HepG2 (cell line): ENCODE measurements at regions of chr20 and their contacts with region 1.

Region 1: GRCh38 chr20:10783707-10784578 is 110.1 kb upstream of the JAG1 start:
- DNase-seq: no peak
- ATAC-seq: peak; percentile 32; the same call in 2 of the 3 replicates
- H3K4me3 ChIP-seq: no peak overlapping the region
- H3K27ac ChIP-seq: no peak overlapping the region
- H3K4me1 ChIP-seq: peaks cover 16% of the 10 kb centered on the region
- H3K27me3 ChIP-seq: peaks cover 0 to 10% of the 10 kb centered on the region in 2 experiments; a peak in 2 of 5 replicates
- CTCF ChIP-seq: no peak
- EP300 ChIP-seq: no peak
- POLR2A ChIP-seq: no peak
- RAD21 ChIP-seq: no peak

Region 2: DNA sequence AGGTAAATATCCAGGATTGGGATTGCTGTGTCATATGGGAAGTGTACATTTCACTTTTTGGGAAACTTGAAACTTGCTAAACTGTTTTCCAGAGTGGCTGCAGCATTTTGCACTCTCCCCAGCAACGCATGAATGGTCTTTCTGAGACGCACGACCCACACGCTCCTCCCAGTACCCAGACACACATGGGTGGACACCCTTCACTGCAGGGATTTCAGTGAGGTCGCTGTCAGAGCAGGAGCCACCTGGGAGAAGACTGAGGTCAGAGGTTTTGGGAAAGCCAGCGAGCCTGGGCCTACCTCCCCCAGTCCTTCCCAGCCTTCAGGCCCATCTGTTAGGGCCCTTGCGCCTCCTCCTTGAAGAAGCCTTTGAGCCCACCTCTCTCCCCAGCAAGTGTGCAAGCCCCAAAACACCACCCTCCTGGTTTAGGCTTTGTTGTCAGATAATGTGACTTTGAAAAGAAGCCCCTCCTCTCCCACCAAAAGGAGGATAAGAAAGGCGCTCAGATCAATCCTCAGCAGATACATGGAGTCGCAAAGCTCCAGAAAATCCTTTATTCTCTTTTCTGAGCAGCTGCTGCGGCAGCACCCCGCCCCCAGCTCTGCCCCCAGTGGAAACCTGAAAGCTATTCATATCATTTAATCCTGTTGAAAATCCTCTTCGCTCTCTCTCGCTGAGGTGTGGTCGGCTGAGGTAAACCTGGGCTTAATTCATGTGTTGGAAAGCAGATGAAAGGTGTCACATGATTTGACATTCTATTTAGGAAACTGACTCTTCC is 97.4 kb before region 1 on chr20:
- CTCF ChIA-PET with region 1: no interaction called
- POLR2A ChIA-PET with region 1: no interaction called
- in situ Hi-C with region 1: no loop called
- intact Hi-C with region 1: no loop called
- DNase-seq: no peak
- ATAC-seq: no peak
- H3K4me3 ChIP-seq: no peak overlapping the region
- H3K27ac ChIP-seq: no peak overlapping the region
- H3K4me1 ChIP-seq: peaks cover 32% of the 10 kb centered on the region
- H3K27me3 ChIP-seq: no peaks in the 10 kb centered on the region
- CTCF ChIP-seq: no peak
- EP300 ChIP-seq: no peak
- POLR2A ChIP-seq: no peak
- RAD21 ChIP-seq: no peak

Region 3: GRCh38 chr20:10864076-10864918 is 80.4 kb after region 1 on chr20:
- CTCF ChIA-PET with region 1: no interaction called
- POLR2A ChIA-PET with region 1: no interaction called
- in situ Hi-C with region 1: no loop called
- intact Hi-C with region 1: loop called (anchors 5 kb)
- DNase-seq: no peak
- ATAC-seq: no peak; the same call in 1 of the 3 replicates
- H3K4me3 ChIP-seq: no peak overlapping the region
- H3K27ac ChIP-seq: no peak overlapping the region
- H3K4me1 ChIP-seq: peaks cover 10% of the 10 kb centered on the region
- H3K27me3 ChIP-seq: no peaks in the 10 kb centered on the region
- CTCF ChIP-seq: no peak
- EP300 ChIP-seq: no peak
- POLR2A ChIP-seq: no peak
- RAD21 ChIP-seq: no peak

Region 4: GRCh38 chr20:11785885-11786507 is 1002.1 kb after region 1 on chr20:
- CTCF ChIA-PET with region 1: no interaction called
- POLR2A ChIA-PET with region 1: no interaction called
- in situ Hi-C with region 1: no loop called
- intact Hi-C with region 1: loop called (anchors 5 kb)
- DNase-seq: no peak
- ATAC-seq: no peak
- H3K4me3 ChIP-seq: no peak overlapping the region
- H3K27ac ChIP-seq: no peak overlapping the region
- H3K4me1 ChIP-seq: no peaks in the 10 kb centered on the region
- H3K27me3 ChIP-seq: no peaks in the 10 kb centered on the region
- CTCF ChIP-seq: no peak
- EP300 ChIP-seq: no peak
- POLR2A ChIP-seq: no peak
- RAD21 ChIP-seq: no peak